ENCODE measurements at regions of chr10 and their contacts with region 1.

Region 1: GRCh38 chr10:108249940-108250339 is 1085.4 kb upstream of the SORCS1 start:
- DNase-seq: no peak
- H3K4me3 ChIP-seq: no peak overlapping the region
- H3K27ac ChIP-seq: no peak overlapping the region
- H3K4me1 ChIP-seq: no peaks in the 10 kb centered on the region
- H3K27me3 ChIP-seq: no peaks in the 10 kb centered on the region
- CTCF ChIP-seq: no peak
- EP300 ChIP-seq: no peak
- POLR2A ChIP-seq: no peak

Region 2: DNA sequence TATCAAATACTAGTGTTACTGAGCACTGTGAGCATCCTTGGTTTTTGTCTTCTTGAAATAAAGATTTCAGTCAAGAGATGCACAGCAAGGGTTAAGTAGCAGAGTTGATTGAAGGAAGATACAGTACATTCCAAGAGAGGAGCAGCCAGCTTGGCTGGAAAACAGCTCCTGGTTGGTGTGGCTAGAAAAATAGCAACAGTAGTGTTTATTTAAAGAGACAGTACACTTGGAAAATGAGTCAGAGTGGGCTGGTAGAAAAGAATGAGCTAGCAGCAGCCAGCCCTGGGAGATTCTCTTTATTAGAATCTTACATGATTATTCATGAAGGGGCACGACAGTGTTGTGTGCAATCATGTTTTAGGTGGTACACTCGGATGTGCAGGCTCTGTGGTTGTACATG is 69.1 kb before region 1 on chr10:
- in situ Hi-C with region 1: no loop called
- intact Hi-C with region 1: no loop called
- DNase-seq: no peak
- H3K4me3 ChIP-seq: no peak overlapping the region
- H3K27ac ChIP-seq: no peak overlapping the region
- H3K4me1 ChIP-seq: no peaks in the 10 kb centered on the region
- H3K27me3 ChIP-seq: no peaks in the 10 kb centered on the region
- CTCF ChIP-seq: no peak
- EP300 ChIP-seq: no peak
- POLR2A ChIP-seq: no peak

Region 3: GRCh38 chr10:109467551-109467950 is 1217.6 kb after region 1 on chr10:
- in situ Hi-C with region 1: no loop called
- intact Hi-C with region 1: loop called (anchors 5 kb)
- DNase-seq: no peak
- H3K4me3 ChIP-seq: no peak overlapping the region
- H3K27ac ChIP-seq: no peak overlapping the region
- H3K4me1 ChIP-seq: no peaks in the 10 kb centered on the region
- H3K27me3 ChIP-seq: no peaks in the 10 kb centered on the region
- CTCF ChIP-seq: no peak
- EP300 ChIP-seq: no peak
- POLR2A ChIP-seq: no peak